ENCODE measurements at regions of chr20 and their contacts with region 1.

Region 1: DNA sequence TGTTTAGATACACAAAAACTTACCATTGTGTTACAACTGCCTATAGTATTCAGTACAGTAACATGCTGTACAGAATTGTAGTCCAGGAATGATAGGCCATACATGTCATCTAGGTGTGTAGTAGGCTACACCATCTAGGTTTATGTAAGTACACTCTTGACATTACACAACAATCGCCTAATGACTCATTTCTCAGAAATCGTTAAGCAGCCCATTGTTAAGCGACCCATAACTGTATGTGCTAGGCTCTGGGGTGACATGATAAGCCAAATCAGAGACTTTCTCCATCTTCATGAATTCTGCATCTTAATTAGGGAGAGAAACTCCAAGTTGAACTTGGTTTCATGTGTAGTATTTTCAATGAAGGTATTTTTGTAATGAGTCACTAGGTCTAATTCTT is 17.2 kb downstream of the STK35 start:
- DNase-seq: peak; percentile 32
- H3K4me3 Mint-ChIP-seq: peak overlapping the region; percentile 44
- H3K27ac Mint-ChIP-seq: peak overlapping the region; percentile 91
- H3K4me1 Mint-ChIP-seq: peaks cover 68% of the 10 kb centered on the region
- H3K27me3 Mint-ChIP-seq: no peaks in the 10 kb centered on the region

Region 2: GRCh38 chr20:2093159-2093781 is 25.5 kb before region 1 on chr20:
- CTCF ChIA-PET with region 1: interaction called, 10 read pairs
- POLR2A ChIA-PET with region 1: no interaction called
- intact Hi-C with region 1: no loop called
- DNase-seq: peak; percentile 53
- H3K4me3 Mint-ChIP-seq: no peak overlapping the region
- H3K27ac Mint-ChIP-seq: no peak overlapping the region
- H3K4me1 Mint-ChIP-seq: no peaks in the 10 kb centered on the region
- H3K27me3 Mint-ChIP-seq: peaks cover 32% of the 10 kb centered on the region

Region 3: GRCh38 chr20:2101865-2102584 is 16.8 kb before region 1 on chr20:
- CTCF ChIA-PET with region 1: interaction called, 3 read pairs
- POLR2A ChIA-PET with region 1: interaction called, 7 read pairs
- intact Hi-C with region 1: loop called (anchors 1 kb)
- DNase-seq: peak; percentile 92
- H3K4me3 Mint-ChIP-seq: peak overlapping the region; percentile 77
- H3K27ac Mint-ChIP-seq: peak overlapping the region; percentile 99
- H3K4me1 Mint-ChIP-seq: peaks cover 42% of the 10 kb centered on the region
- H3K27me3 Mint-ChIP-seq: no peaks in the 10 kb centered on the region

Region 4: DNA sequence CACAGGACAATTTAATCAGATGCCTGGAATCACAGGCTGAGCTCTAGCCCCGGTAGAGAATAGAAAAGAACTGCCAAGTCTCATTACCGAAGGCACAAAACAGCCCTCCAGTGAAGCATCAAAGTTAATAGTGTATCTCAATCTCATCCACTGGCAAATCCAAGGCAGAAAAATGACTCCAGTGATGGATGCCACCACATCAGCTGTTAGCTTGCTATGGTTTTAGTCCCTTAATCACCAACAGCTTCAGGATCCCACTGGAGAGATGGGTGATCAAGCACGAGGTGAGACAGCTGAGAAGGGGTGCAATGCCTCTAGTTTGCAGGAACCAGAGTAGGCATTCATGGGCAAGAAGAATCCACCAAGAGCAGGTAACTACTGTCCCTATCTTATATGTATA is 64.6 kb after region 1 on chr20:
- CTCF ChIA-PET with region 1: no interaction called
- POLR2A ChIA-PET with region 1: no interaction called
- intact Hi-C with region 1: no loop called
- DNase-seq: no peak
- H3K4me3 Mint-ChIP-seq: no peak overlapping the region
- H3K27ac Mint-ChIP-seq: no peak overlapping the region
- H3K4me1 Mint-ChIP-seq: no peaks in the 10 kb centered on the region
- H3K27me3 Mint-ChIP-seq: peaks cover 2% of the 10 kb centered on the region

Region 5: DNA sequence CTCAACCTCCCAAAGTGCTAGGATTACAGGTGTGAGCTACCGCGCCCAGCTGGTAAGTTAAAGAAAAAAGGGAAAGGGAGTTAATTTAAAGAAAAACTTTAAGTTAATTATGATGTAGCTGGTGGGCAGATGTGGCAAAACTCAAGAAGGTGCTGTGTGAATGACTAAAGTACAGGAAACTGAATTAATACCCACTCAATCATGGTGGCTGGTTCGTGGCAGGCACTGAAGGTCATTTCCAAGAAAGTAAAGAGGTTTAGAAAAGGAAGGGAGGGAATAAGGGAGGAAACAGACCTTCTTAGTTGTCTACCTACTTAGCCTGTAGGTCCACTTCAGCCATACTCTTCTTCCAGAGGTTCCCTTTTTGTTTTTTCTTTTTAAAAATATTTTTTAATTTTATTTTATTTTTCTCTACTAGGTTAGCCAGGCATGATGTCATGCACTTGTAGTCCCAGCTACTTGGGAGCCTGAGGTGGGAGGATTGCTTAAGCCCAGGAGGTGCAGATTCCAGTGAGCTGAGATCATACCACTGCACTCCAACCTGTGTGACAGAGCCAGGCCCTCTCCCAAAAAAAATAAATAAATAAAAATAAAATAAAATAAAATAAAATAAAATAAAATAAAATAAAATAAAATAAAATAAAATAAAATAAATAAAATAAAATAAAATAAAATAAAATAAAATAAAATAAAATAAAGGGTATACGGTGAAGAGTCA is 165.1 kb after region 1 on chr20:
- CTCF ChIA-PET with region 1: no interaction called
- POLR2A ChIA-PET with region 1: no interaction called
- intact Hi-C with region 1: no loop called
- DNase-seq: no peak
- H3K4me3 Mint-ChIP-seq: no peak overlapping the region
- H3K27ac Mint-ChIP-seq: no peak overlapping the region
- H3K4me1 Mint-ChIP-seq: no peaks in the 10 kb centered on the region
- H3K27me3 Mint-ChIP-seq: peaks cover 2% of the 10 kb centered on the region

Measured in activated CD4-positive, alpha-beta memory T cell treated with anti-CD3 and anti-CD28 coated beads for 36 hours (primary cell).